AG04449 (cell line): ENCODE measurements at regions of chr9 and their contacts with region 1.

Region 1: GRCh38 chr9:128688512-128689292 is at the start of gene SET:
- DNase-seq: no peak
- H3K4me3 ChIP-seq: peak within 1 kb of the TSS; percentile 84
- CTCF ChIP-seq: no peak

Region 2: DNA sequence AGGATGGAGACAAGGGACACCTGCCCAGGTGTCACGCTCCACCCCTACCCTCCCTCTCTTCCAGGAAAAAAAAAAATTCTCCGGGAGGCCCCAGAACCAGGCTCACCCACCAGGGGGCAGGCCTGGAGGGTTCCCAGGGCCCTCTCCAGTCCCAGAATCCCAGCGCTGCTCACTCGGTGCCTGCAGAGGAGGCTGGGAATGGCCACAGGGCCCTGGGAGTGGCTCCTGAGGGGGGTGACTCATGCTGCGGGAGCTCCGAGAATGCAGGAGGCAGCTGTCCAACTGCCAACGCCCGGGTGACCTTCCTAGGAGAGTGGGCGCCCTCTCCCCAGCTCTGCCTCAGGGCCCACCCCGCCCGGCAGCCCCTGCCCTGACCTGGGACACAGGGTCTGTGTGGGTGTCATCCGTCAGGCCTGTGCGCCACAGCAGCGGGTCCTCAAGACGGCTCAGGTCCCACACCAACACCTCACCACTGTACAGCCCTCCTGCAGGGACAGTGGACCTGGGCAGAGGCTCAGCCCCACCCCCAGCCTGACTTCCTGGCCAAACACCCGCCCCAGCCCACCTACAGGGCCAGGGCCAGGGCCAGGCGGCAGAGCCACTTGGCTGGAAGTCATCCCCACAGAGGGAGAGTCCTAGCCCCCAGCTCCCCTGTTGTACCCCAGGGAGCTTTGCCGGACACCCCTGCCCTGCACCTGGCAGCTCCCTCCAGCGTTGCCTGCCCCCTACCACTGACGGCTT is 53.2 kb before region 1 on chr9:
- CTCF ChIA-PET with region 1: interaction called, 11 read pairs
- POLR2A ChIA-PET with region 1: interaction called, 7 read pairs
- DNase-seq: peak; percentile 70
- H3K4me3 ChIP-seq: no peak overlapping the region; the same call in 1 of the 2 replicates
- CTCF ChIP-seq: peak; percentile 88

Region 3: DNA sequence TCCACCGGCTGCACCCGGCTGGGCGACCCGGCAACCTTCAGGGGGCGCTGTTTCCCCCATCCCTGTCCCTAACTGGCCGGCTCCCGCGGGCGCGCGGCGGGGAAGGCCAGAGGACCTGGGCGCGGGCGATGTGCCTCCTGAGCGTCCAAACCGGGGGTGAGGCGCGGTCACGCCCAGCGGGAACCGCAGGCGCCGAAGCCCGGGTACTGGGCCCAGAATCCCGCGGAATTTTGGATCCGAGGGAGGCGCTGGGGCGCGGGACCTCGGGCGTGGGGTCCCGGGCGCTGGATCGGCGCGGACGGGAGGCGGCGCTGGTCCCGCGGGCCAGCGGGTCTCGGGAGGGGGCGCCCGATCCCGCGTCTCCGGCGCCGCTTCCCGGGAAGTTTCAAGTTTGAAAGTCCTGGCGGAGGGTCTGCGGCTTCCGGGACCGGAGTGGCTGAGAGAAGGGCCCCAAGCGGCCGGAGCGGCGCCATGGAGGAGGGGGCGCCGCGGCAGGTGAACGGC is 13.8 kb after region 1 on chr9 and contains the start of gene PKN3:
- CTCF ChIA-PET with region 1: interaction called, 68 read pairs
- POLR2A ChIA-PET with region 1: interaction called, 3 read pairs
- DNase-seq: no peak
- H3K4me3 ChIP-seq: peak within 1 kb of the TSS; percentile 70
- CTCF ChIP-seq: peak; percentile 96

Region 4: DNA sequence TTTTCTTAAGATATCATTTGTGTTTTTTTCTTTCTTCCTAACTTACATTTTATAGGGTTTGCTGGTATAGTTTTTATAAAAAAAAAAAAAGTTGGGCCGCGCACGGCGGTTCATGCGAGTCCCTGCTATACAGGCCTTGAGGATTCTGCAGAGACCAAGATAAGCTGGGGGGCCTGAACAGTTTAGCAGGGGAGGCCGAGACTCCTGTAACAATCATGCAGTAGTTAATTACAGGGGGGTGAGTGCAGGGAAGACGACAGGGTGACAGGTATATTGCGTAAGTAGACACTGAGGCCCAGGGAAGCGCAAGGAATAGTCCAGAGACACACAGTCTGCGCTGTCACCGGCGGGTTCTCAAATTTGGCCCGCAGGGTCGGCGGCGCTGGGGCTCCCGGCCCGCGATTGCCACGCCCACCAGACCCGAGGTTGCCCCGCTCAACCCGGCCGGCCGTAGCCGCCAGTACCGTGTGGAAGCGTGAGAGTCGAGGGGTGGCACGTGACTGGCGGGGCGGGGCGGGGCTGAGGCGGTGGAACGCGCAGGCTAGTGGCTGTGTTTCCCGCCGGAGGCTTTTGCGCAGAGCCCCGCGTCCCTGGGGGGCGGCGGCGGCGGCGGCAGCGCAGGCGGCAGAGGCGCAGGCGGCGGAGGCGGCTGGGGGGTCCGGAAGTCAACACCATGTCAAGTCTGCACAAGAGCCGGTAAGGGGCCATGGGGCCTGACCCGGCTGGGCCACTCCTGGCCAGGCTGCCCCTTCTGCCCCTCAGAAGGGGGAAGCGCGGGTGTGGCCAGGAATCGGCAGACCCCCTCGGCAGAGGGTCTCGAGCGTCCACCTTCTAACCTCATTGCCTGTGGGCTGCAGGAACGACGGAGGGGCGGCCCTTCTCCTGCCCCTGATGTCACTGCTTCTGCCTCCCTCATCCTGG is 98.2 kb after region 1 on chr9 and contains the start of gene TBC1D13:
- CTCF ChIA-PET with region 1: no interaction called
- POLR2A ChIA-PET with region 1: no interaction called
- DNase-seq: no peak
- H3K4me3 ChIP-seq: peak within 1 kb of the TSS; percentile 99
- CTCF ChIP-seq: no peak